Activated T-helper 2 cell treated with anti-CD3 and anti-CD28 coated beads, Interferon-gamma antibody, Interleukin-2, Interleukin-4, amounts not matched to agents 10 μg/mL and 5 μg/mL and 100 μg/mL, durations not matched to agents 14 hours and 24 hours and 36 hours (primary cell): ENCODE measurements at regions of chr16 and their contacts with region 1.

Region 1: DNA sequence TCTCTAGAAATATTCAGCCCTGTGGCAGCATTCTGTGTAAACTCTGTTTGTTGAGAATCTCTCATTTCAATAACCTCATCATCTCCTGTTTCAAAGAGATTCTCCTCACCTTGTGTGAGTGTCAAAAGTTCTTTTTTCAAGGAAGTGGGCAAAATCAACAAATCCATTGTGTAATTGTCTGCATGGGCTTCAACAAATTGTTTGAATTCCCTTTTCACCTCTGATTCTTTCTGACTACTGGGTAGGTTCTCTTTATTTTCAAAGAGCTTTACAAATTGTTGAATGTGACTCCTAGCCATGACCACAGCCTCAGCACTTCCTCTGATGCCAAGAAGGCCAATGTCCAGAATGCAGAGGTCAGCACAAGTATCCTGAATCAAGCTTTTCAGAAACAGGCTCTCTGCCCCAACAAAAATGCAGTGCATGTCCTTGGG is 48.0 kb downstream of the N4BP1 start:
- DNase-seq: no peak
- H3K4me3 Mint-ChIP-seq: no peak overlapping the region
- H3K27ac Mint-ChIP-seq: peak overlapping the region; percentile 47
- H3K4me1 Mint-ChIP-seq: peaks cover 64% of the 10 kb centered on the region
- H3K27me3 Mint-ChIP-seq: no peaks in the 10 kb centered on the region

Region 2: DNA sequence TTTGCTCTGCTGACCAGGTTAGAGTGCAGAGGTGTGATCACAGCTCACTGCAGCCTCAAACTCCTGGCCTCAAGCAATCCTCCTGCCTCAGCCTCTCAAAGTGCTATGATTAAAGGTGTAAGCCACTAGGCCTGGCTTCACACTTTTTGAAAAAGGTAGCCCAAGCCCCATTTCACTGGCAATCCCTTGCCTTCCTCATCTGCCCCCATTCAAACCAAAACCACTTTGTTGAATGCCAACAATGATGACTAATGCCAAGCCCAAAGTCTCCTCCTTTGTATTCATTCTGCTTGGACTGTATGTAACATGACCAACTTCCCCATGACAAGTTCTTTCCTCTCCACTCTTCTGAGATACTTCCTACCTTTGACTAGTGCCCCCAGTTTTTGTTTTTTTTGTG is 14.9 kb after region 1 on chr16:
- intact Hi-C with region 1: loop called (anchors 1 kb)
- DNase-seq: no peak
- H3K4me3 Mint-ChIP-seq: no peak overlapping the region
- H3K27ac Mint-ChIP-seq: peak overlapping the region; percentile 56
- H3K4me1 Mint-ChIP-seq: peaks cover 33% of the 10 kb centered on the region
- H3K27me3 Mint-ChIP-seq: no peaks in the 10 kb centered on the region